ENCODE measurements at regions of chr1 and their contacts with region 1.

Region 1: GRCh38 chr1:26500488-26501175 is 28.4 kb downstream of the HMGN2 start:
- DNase-seq: peak; percentile 87 to 91
- H3K4me3 ChIP-seq: peak overlapping the region; percentile 84
- H3K4me3 Mint-ChIP-seq: peak overlapping the region; percentile 79
- H3K27ac Mint-ChIP-seq: peak overlapping the region; percentile 73
- H3K4me1 ChIP-seq: no peaks in the 10 kb centered on the region
- H3K4me1 Mint-ChIP-seq: peaks cover 6% of the 10 kb centered on the region
- H3K27me3 ChIP-seq: no peaks in the 10 kb centered on the region
- H3K27me3 Mint-ChIP-seq: no peaks in the 10 kb centered on the region
- CTCF ChIP-seq: peak in 1 of 2 experiments; percentile 5

Region 2: GRCh38 chr1:26418865-26419349 is 81.7 kb before region 1 on chr1:
- CTCF ChIA-PET with region 1: no interaction called
- POLR2A ChIA-PET with region 1: no interaction called
- intact Hi-C with region 1: no loop called
- DNase-seq: peak; percentile 70 to 86
- H3K4me3 ChIP-seq: no peak overlapping the region
- H3K4me3 Mint-ChIP-seq: peak overlapping the region; percentile 30
- H3K27ac Mint-ChIP-seq: peak overlapping the region; percentile 88
- H3K4me1 ChIP-seq: peaks cover 39% of the 10 kb centered on the region
- H3K4me1 Mint-ChIP-seq: peaks cover 15% of the 10 kb centered on the region
- H3K27me3 ChIP-seq: no peaks in the 10 kb centered on the region
- H3K27me3 Mint-ChIP-seq: no peaks in the 10 kb centered on the region
- CTCF ChIP-seq: no peak

Region 3: DNA sequence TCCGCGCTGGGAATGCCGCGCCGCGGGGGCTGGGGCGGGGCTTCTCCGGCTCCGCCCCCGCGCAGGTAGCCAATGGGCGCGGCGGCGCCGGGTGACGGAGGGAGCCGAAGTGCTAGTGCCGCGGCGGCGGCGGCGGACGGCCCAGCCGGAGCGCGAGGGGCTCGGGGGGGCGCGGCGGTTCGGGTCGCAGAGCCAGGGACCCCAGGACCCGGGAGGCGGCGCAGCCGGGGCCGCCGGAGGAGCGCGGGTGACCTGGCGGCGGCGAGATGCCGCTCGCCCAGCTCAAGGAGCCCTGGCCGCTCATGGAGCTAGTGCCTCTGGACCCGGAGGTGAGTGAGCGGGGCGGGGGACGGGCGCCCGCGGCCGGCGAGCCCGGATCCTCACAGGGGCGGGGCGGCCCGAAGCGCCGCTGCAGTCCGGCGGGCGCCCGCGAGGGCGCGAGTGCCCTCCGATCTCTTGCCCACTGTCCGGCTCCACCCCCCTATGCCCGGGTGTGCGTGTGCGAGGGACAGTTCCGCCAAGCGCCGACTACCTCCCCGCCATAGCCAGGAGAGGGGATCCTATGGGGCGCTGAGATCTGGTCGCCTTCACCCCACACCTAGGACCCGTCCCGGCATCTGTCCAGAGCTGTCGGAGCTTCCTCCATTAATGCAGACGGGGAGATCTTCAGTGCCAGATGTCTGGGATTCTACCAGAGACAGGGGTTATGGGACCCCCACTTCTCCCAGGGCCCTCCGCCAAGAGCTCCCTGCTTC is 29.2 kb after region 1 on chr1 and contains the start of gene RPS6KA1:
- CTCF ChIA-PET with region 1: interaction called, 15 read pairs
- POLR2A ChIA-PET with region 1: interaction called, 12 read pairs
- intact Hi-C with region 1: loop called (anchors 1 kb)
- DNase-seq: peak; percentile 65 to 81
- H3K4me3 ChIP-seq: peak within 1 kb of the TSS; percentile 53
- H3K4me3 Mint-ChIP-seq: peak within 1 kb of the TSS; percentile 90
- H3K27ac Mint-ChIP-seq: peak within 1 kb of the TSS; percentile 87
- H3K4me1 ChIP-seq: peaks cover 18% of the 10 kb centered on the region
- H3K4me1 Mint-ChIP-seq: no peaks in the 10 kb centered on the region
- H3K27me3 ChIP-seq: no peaks in the 10 kb centered on the region
- H3K27me3 Mint-ChIP-seq: no peaks in the 10 kb centered on the region
- CTCF ChIP-seq: no peak
- total RNA-seq, gene RPS6KA1: 26.9 and 29.0 TPM in 2 replicates

Region 4: DNA sequence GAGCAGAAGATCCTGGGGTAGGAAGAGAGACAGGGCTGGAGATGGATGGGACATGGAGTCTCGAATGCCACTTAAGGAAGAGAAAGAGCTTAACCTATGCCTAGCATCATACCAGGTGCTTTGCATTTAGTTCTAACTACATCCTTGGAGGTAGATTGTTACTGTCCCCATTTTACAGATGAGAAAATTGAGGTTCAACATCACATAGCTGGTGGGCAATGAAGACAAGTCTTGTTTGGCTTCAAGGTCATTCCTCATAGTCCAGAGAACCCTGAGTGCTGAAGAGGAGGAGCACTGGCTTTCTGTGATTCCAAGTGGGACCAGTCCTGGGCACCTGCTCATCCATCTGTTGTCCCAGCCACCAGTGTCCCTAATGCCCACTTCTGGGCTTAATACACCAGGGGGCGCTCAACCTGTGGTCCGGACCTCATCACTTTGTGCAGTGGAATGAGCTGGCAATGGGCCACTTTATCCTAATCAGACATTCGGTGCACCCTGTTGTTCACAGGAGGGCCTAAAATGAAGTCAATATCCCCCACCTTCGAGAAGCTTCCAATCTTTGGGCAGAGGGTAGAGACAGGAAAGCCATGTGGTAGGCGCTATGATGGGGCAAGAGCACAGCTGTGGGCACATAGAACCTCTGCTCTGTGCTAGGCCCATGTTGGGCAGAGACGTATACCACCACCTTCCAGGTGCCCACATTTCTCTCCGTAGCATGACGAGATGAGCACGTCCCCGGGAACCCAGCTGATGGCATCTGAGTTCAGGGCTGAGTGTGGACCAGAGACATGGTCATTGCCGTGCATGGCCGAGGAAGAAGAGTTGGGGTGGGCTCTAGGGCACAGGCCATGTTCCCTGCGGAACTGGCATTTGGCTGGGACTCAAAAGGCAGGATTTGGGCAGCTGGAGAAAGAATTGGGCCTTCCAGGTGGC is 38.1 kb after region 1 on chr1:
- CTCF ChIA-PET with region 1: interaction called, 12 read pairs
- POLR2A ChIA-PET with region 1: no interaction called
- intact Hi-C with region 1: no loop called
- DNase-seq: peak in 1 of 2 experiments; percentile 36
- H3K4me3 ChIP-seq: no peak overlapping the region
- H3K4me3 Mint-ChIP-seq: no peak overlapping the region
- H3K27ac Mint-ChIP-seq: no peak overlapping the region
- H3K4me1 ChIP-seq: peaks cover 7% of the 10 kb centered on the region; the same call in 1 of the 2 replicates
- H3K4me1 Mint-ChIP-seq: no peaks in the 10 kb centered on the region
- H3K27me3 ChIP-seq: no peaks in the 10 kb centered on the region
- H3K27me3 Mint-ChIP-seq: no peaks in the 10 kb centered on the region
- CTCF ChIP-seq: peak; percentile 22 to 26

Region 5: DNA sequence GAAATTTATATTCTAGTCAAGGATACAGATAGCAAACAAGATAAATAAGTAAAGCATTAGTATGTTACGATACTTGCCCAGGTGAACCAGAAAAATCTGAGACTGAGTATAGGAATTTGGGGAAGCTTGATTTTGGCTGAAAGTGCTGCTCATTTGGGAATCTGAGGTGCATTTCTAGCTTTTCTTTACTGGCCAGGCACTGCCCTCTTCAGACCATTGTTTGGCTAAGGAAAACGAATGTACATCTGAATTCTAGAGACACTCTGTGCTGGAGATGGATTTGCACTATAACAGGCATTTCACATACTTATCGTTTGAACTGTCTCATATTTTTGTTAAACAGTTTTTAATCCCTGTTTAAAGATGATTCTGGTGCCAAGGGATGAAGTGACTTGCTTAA is 218.6 kb after region 1 on chr1:
- CTCF ChIA-PET with region 1: interaction called, 11 read pairs
- POLR2A ChIA-PET with region 1: no interaction called
- intact Hi-C with region 1: no loop called
- DNase-seq: no peak
- H3K4me3 ChIP-seq: no peak overlapping the region
- H3K4me3 Mint-ChIP-seq: no peak overlapping the region
- H3K27ac Mint-ChIP-seq: no peak overlapping the region
- H3K4me1 ChIP-seq: peaks cover 44% of the 10 kb centered on the region
- H3K4me1 Mint-ChIP-seq: peaks cover 26% of the 10 kb centered on the region
- H3K27me3 ChIP-seq: no peaks in the 10 kb centered on the region
- H3K27me3 Mint-ChIP-seq: no peaks in the 10 kb centered on the region
- CTCF ChIP-seq: peak in 1 of 2 experiments; percentile 12

Region 6: DNA sequence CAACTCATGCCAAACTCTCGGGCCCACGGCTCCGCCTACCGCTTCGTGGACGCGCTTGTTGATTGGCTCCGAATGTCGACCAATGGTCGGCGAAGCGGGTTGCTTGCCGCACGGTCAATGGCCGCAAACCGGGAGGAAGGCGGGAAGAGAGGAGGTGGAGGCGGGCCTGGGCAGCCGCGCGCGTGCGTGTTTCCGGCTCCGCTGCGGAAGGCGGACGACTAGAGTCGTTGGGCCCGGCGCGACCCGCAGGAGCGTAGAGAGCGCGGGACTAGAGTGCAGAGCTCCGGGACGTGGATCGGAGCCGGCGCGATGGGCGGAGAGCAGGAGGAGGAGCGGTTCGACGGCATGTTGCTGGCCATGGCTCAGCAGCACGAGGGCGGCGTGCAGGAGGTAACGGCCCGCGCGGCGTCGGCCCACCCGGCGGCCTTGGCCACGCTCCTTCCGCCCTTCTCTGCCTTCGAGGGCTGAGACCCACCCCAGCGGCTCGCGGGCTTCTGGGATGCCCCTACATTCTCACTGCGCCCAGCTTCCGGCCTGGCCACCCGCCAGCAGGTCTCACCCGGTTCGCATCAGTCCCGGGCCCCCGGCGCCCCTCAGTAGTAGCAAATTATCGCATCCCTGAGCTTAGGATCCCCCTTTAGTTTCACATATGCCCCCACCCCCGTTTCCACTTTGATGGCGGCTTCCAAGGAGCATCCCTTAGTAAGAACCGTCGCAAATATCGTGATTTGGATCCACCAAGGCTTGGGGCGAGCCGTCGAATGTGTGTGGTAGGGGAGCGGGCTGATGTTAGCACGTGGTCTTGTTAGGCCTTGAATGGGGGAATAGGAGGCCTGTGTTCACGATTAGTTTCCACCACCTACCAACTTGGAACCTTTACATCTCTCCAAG is 421.2 kb after region 1 on chr1 and contains the start of gene NUDC:
- CTCF ChIA-PET with region 1: no interaction called
- POLR2A ChIA-PET with region 1: interaction called, 14 read pairs
- intact Hi-C with region 1: no loop called
- DNase-seq: peak; percentile 94 to 95
- H3K4me3 ChIP-seq: peak within 1 kb of the TSS; percentile 83
- H3K4me3 Mint-ChIP-seq: peak within 1 kb of the TSS; percentile 97
- H3K27ac Mint-ChIP-seq: peak within 1 kb of the TSS; percentile 82
- H3K4me1 ChIP-seq: peaks cover 12% of the 10 kb centered on the region
- H3K4me1 Mint-ChIP-seq: peaks cover 7% of the 10 kb centered on the region
- H3K27me3 ChIP-seq: no peaks in the 10 kb centered on the region
- H3K27me3 Mint-ChIP-seq: no peaks in the 10 kb centered on the region
- CTCF ChIP-seq: no peak
- total RNA-seq, gene NUDC: 81.3 and 87.2 TPM in 2 replicates

Region 7: GRCh38 chr1:26993237-26994019 is 492.8 kb after region 1 on chr1 and contains the start of gene TRNP1:
- CTCF ChIA-PET with region 1: no interaction called
- POLR2A ChIA-PET with region 1: no interaction called
- intact Hi-C with region 1: no loop called
- DNase-seq: peak; percentile 91
- H3K4me3 ChIP-seq: peak within 1 kb of the TSS; percentile 83
- H3K4me3 Mint-ChIP-seq: peak within 1 kb of the TSS; percentile 76
- H3K27ac Mint-ChIP-seq: peak within 1 kb of the TSS; percentile 87
- H3K4me1 ChIP-seq: peaks cover 56% of the 10 kb centered on the region
- H3K4me1 Mint-ChIP-seq: peaks cover 17% of the 10 kb centered on the region
- H3K27me3 ChIP-seq: no peaks in the 10 kb centered on the region
- H3K27me3 Mint-ChIP-seq: no peaks in the 10 kb centered on the region
- CTCF ChIP-seq: no peak
- total RNA-seq, gene TRNP1: 23.3 and 23.6 TPM in 2 replicates

Measured in Caco-2 (cell line).